ENCODE measurements at regions of chr4 and their contacts with region 1.

Region 1: GRCh38 chr4:153153339-153153871 is 50.8 kb upstream of the TRIM2 start:
- DNase-seq: peak; percentile 92
- H3K4me3 Mint-ChIP-seq: peak overlapping the region; percentile 89
- H3K27ac Mint-ChIP-seq: peak overlapping the region; percentile 79
- H3K4me1 Mint-ChIP-seq: peaks cover 48% of the 10 kb centered on the region
- H3K27me3 Mint-ChIP-seq: peaks cover 36% of the 10 kb centered on the region

Region 2: GRCh38 chr4:153115322-153116290 is 37.8 kb before region 1 on chr4:
- intact Hi-C with region 1: loop called (anchors 1 kb)
- DNase-seq: peak; percentile 92
- H3K4me3 Mint-ChIP-seq: no peak overlapping the region
- H3K27ac Mint-ChIP-seq: no peak overlapping the region
- H3K4me1 Mint-ChIP-seq: peaks cover 9% of the 10 kb centered on the region
- H3K27me3 Mint-ChIP-seq: peaks cover 5% of the 10 kb centered on the region

Region 3: DNA sequence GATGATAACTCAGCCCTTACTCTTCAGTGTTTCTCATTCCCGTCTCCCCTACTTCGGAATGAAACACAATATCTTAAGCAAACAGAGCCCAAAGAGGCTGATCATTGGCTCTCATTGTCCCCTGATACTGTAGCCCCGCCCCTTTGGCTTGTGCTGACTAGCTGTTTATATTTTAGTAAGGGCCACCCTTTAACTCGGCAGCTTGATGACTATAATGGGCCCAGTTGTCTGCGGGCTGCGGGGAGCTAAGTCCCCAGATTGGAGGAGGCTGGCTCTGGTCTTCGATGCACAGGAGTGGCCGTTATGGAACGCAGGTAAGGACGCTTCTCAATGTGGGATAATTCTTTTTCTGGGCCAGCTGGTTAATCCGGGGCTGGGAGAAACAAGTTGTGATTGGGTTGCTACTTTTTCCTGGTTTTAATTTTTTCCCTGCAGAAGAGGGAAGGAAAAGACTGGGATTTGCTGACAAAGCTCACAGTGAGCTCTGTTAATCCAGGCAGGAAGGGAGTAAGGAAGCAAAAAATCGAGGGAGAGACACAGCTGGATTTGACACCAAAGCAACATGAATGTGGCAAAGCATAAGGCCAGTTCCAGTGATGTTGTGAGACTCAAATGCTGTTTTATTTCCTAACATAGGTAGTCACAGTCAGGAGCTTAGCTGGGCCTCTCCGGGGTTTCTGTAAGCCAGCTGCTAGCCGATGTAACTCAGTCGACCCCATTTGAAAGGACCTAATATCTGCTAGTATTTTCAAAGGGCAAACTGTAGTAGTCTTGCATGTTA is 51.0 kb after region 1 on chr4 and contains the start of gene TRIM2:
- intact Hi-C with region 1: loop called (anchors 5 kb)
- DNase-seq: no peak
- H3K4me3 Mint-ChIP-seq: peak within 1 kb of the TSS; percentile 52
- H3K27ac Mint-ChIP-seq: peak within 1 kb of the TSS; percentile 45
- H3K4me1 Mint-ChIP-seq: peaks cover 18% of the 10 kb centered on the region
- H3K27me3 Mint-ChIP-seq: peaks cover 2% of the 10 kb centered on the region
- total RNA-seq, gene TRIM2: 0.21 TPM in 1 of 2 replicates, not detected in the other

Region 4: DNA sequence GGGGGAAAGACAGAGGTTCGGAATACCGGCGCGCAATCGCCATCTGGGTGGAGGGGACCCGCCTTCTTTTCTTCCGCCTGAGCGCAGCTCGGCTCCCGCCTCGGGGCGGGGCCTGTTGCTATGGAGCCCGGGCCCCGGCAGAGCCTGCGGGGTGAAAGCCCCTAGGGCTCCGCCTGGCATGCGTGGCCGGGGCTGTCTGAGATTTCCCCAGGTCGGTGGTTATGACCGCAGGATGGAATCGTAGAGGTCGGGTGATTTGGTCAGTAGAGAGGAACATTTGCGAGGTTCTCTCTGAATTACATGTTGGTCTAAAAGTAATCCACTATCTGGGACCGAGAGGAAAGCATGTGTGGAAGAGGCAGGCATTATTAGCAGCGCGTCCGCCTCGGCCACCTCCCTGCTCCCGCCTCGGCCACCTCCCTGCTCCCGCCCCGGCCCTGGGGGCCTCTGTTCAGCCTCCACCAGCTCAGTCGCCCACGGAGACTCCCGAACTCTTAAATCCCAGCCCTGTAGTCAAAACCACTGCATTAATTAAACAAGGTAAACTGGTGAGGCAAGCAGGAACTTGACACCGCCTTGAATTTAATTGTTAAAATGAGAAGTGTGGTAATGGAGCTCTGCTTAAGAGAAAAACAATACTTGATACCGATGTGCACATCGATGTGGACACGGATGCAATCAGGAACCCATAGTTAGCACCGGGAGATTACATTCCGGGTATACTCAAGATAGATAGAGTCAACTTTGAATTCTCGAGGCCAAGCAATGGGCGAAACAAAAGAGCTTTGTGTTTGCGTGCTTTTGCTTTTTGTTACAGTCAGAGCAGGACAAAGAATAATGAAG is 96.0 kb after region 1 on chr4:
- intact Hi-C with region 1: loop called (anchors 2 kb)
- DNase-seq: peak; percentile 95
- H3K4me3 Mint-ChIP-seq: peak overlapping the region; percentile 89
- H3K27ac Mint-ChIP-seq: peak overlapping the region; percentile 83
- H3K4me1 Mint-ChIP-seq: peaks cover 9% of the 10 kb centered on the region
- H3K27me3 Mint-ChIP-seq: peaks cover 2% of the 10 kb centered on the region

Region 5: GRCh38 chr4:153344131-153345010 is 191.0 kb after region 1 on chr4 and contains the start of gene MND1:
- intact Hi-C with region 1: loop called (anchors 2 kb)
- DNase-seq: peak; percentile 98
- H3K4me3 Mint-ChIP-seq: peak within 1 kb of the TSS; percentile 93
- H3K27ac Mint-ChIP-seq: peak within 1 kb of the TSS; percentile 90
- H3K4me1 Mint-ChIP-seq: peaks cover 46% of the 10 kb centered on the region
- H3K27me3 Mint-ChIP-seq: peaks cover 10% of the 10 kb centered on the region
- total RNA-seq, gene MND1: 15.0 and 18.8 TPM in 2 replicates

Region 6: GRCh38 chr4:153731239-153731638 is 577.8 kb after region 1 on chr4:
- intact Hi-C with region 1: loop called (anchors 10 kb)
- DNase-seq: no peak
- H3K4me3 Mint-ChIP-seq: no peak overlapping the region
- H3K27ac Mint-ChIP-seq: no peak overlapping the region
- H3K4me1 Mint-ChIP-seq: peaks cover 4% of the 10 kb centered on the region
- H3K27me3 Mint-ChIP-seq: peaks cover 32% of the 10 kb centered on the region